ENCODE measurements at regions of chr11 and their contacts with region 1.

Region 1: GRCh38 chr11:57249384-57250319 is 12.6 kb upstream of the APLNR start:
- DNase-seq: peak; percentile 72
- H3K4me3 ChIP-seq: no peak overlapping the region
- H3K27ac ChIP-seq: no peak overlapping the region
- H3K4me1 ChIP-seq: no peaks in the 10 kb centered on the region
- H3K27me3 ChIP-seq: peaks cover 3% of the 10 kb centered on the region
- CTCF ChIP-seq: peak; percentile 95

Region 2: GRCh38 chr11:56841210-56841810 is 408.3 kb before region 1 on chr11:
- CTCF ChIA-PET with region 1: interaction called, 41 read pairs
- POLR2A ChIA-PET with region 1: no interaction called
- intact Hi-C with region 1: loop called (anchors 1 kb)
- DNase-seq: peak; percentile 70
- H3K4me3 ChIP-seq: no peak overlapping the region
- H3K27ac ChIP-seq: no peak overlapping the region
- H3K4me1 ChIP-seq: no peaks in the 10 kb centered on the region
- H3K27me3 ChIP-seq: peaks cover 16% of the 10 kb centered on the region
- CTCF ChIP-seq: peak; percentile 79

Region 3: GRCh38 chr11:57085611-57086010 is 164.0 kb before region 1 on chr11:
- CTCF ChIA-PET with region 1: interaction called, 17 read pairs
- POLR2A ChIA-PET with region 1: no interaction called
- intact Hi-C with region 1: no loop called
- DNase-seq: peak; percentile 7
- H3K4me3 ChIP-seq: no peak overlapping the region
- H3K27ac ChIP-seq: no peak overlapping the region
- H3K4me1 ChIP-seq: no peaks in the 10 kb centered on the region
- H3K27me3 ChIP-seq: peaks cover 5% of the 10 kb centered on the region
- CTCF ChIP-seq: 0 out of 2 replicates have a peak, but pooled peaks have one; percentile 25

Region 4: GRCh38 chr11:57131080-57131790 is 118.4 kb before region 1 on chr11:
- CTCF ChIA-PET with region 1: interaction called, 13 read pairs
- POLR2A ChIA-PET with region 1: no interaction called
- intact Hi-C with region 1: loop called (anchors 1 kb)
- DNase-seq: peak; percentile 5
- H3K4me3 ChIP-seq: no peak overlapping the region
- H3K27ac ChIP-seq: no peak overlapping the region
- H3K4me1 ChIP-seq: no peaks in the 10 kb centered on the region
- H3K27me3 ChIP-seq: peaks cover 8% of the 10 kb centered on the region
- CTCF ChIP-seq: peak; percentile 55

Region 5: DNA sequence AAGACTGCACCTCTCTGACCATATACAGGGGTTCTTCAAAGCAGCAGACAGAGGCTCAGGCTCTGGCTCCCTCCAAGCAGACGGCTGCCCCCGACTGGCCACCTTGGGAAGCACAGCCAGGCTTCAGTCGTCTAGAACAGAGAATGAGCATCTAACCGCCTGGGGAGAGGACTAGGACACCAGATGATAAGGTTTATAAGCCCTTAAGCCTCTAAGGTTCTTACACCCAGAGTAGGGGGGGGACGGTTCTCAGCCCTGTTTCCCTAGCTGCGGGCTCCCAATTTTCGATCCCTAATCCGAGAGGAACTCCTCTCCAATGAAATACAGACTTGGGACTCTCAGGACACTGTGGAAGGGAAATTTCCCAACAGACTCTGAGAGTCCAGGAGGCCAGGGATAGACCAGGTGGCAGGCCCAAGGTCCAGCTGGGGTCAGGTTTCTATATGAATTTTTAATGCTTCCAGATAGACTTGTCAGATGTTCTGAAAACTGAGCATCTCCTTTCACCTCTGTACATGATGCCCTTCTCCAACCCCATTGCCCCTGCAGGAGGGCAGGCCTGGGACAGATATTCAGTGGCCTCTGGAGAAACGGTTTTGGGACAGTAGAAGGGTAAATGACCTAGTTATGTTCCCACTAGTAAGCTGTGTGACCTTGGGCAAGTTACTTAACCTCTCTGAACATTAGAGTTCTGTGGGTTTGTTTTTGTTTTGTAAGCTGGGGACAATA is 230.9 kb after region 1 on chr11:
- CTCF ChIA-PET with region 1: no interaction called
- POLR2A ChIA-PET with region 1: no interaction called
- intact Hi-C with region 1: no loop called
- DNase-seq: peak; percentile 87
- H3K4me3 ChIP-seq: no peak overlapping the region
- H3K27ac ChIP-seq: no peak overlapping the region
- H3K4me1 ChIP-seq: peaks cover 16% of the 10 kb centered on the region
- H3K27me3 ChIP-seq: peaks cover 4% of the 10 kb centered on the region
- CTCF ChIP-seq: peak; percentile 96

Region 6: GRCh38 chr11:57812634-57813033 is 563.0 kb after region 1 on chr11:
- CTCF ChIA-PET with region 1: interaction called, 10 read pairs
- POLR2A ChIA-PET with region 1: no interaction called
- intact Hi-C with region 1: no loop called
- DNase-seq: no peak
- H3K4me3 ChIP-seq: no peak overlapping the region
- H3K27ac ChIP-seq: no peak overlapping the region
- H3K4me1 ChIP-seq: no peaks in the 10 kb centered on the region
- H3K27me3 ChIP-seq: no peaks in the 10 kb centered on the region
- CTCF ChIP-seq: no peak

Measured in A673 (cell line).